Ovary (tissue), 10 donors: ENCODE measurements at regions of chr14 and their contacts with region 1.

Region 1: GRCh38 chr14:26761532-26761931 is 163.7 kb upstream of the NOVA1 start:
- DNase-seq: no peak
- H3K4me3 ChIP-seq: no peak overlapping the region
- H3K27ac ChIP-seq: no peak overlapping the region
- H3K4me1 ChIP-seq: no peaks in the 10 kb centered on the region
- H3K27me3 ChIP-seq: no peaks in the 10 kb centered on the region
- CTCF ChIP-seq: no peak
- EP300 ChIP-seq: no peak
- POLR2A ChIP-seq: no peak

Region 2: DNA sequence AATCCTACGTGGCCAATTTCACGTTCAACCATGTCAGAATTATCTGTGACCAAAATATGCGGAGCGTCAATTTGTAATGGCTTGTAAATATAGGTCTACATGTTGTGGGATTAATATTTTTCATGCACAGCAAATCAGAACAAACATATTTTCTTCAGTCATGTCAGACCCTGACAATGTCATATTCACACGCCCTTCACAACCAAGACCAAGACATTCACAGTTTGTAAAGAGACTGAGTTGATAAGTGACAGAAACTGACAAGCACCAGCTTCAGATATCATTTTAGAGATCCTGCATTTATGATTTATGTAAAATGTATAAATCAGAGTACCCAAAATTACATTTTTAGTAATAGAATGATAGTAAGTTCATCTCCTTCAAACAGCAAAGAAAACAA is 106.4 kb before region 1 on chr14:
- intact Hi-C with region 1: no loop called
- DNase-seq: no peak
- H3K4me3 ChIP-seq: no peak overlapping the region
- H3K27ac ChIP-seq: no peak overlapping the region
- H3K4me1 ChIP-seq: no peaks in the 10 kb centered on the region
- H3K27me3 ChIP-seq: no peaks in the 10 kb centered on the region
- CTCF ChIP-seq: no peak
- EP300 ChIP-seq: no peak
- POLR2A ChIP-seq: no peak

Region 3: DNA sequence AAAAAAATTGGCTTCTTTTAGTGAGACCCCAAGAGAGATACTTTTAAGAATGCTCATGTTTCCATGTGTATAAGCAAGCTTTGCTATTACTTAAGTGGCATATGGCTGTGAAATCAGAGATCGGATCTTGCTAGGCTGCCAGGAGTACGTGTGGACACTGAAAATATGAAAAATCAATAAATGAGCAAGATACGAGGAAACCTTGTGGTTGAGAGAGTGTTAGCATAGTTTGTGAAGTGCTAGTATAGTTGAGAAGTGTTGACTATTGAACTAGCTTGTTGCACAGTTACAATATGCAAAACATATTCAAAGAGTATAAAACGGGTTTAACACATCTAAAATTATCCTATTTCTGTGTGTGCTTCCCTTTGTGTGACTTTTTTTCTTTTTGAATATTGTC is 67.2 kb after region 1 on chr14:
- intact Hi-C with region 1: no loop called
- DNase-seq: no peak
- H3K4me3 ChIP-seq: no peak overlapping the region
- H3K27ac ChIP-seq: no peak overlapping the region
- H3K4me1 ChIP-seq: no peaks in the 10 kb centered on the region
- H3K27me3 ChIP-seq: no peaks in the 10 kb centered on the region
- CTCF ChIP-seq: no peak
- EP300 ChIP-seq: no peak
- POLR2A ChIP-seq: no peak

Region 4: DNA sequence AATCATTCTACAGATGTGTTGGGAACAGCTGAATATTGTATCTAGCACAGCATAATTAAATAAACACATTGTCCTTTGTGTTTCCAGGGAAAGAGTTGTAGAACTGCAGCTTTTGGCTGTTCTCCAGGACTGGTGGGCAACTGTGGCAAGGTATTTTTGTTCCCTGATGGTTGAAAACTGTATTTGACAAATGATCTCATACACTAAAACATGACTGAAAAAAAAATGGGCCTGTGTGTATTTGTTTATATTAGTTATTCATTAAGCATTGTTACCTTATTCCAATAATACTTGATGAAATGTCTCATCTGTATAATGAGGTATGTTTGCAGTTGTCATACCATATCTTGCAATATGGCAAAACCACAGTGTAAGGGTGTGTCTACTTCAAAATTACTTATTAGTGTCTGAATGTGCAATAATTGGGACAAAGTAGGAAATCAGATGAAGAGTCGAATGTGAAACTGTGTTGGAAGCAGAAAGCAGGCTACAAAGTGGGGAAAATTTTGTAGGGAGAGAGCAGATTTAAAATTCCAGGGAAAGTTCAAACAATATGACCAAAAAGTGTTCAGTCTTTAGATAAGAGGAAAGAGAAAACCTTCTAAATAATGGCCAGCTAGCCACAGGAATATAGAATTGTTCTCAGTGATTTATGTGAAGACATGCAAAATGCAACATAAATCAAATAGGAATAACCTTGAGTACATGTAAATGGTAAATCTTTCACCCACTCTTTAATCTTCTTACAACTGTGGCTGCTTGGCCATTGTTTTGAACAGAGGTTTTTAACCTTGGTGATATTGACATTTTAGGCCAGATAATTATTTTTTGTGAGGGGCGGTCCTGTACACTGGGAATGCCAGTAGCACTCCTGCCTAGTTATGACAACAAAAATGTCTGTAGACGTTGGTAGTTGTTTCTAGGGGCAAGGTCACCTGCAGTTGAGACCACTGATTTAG is 315.9 kb after region 1 on chr14:
- intact Hi-C with region 1: loop called in 1 of 4 experiments (anchors 10 kb)
- DNase-seq: no peak
- H3K4me3 ChIP-seq: no peak overlapping the region
- H3K27ac ChIP-seq: no peak overlapping the region
- H3K4me1 ChIP-seq: no peaks in the 10 kb centered on the region
- H3K27me3 ChIP-seq: no peaks in the 10 kb centered on the region
- CTCF ChIP-seq: no peak
- EP300 ChIP-seq: no peak
- POLR2A ChIP-seq: no peak

Region 5: DNA sequence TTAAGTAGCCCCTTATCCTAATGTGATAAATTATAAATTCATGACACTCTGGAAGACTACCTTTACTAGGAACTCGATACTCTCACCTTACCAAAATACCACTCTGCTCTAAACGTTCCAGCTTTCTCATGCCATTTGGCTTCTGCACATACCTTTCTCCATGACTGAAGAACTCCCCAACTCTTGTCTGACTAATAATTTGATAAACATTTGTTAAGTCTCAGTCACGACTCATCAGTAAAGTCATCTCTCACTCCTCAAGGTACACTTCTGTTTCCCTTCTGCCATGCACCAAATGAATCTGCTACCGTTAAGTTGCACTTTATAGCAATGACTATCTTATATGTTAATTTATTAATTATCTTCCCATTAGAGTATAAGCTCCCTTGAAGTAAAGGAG is 334.6 kb after region 1 on chr14:
- intact Hi-C with region 1: no loop called
- DNase-seq: no peak
- H3K4me3 ChIP-seq: no peak overlapping the region
- H3K27ac ChIP-seq: no peak overlapping the region
- H3K4me1 ChIP-seq: no peaks in the 10 kb centered on the region
- H3K27me3 ChIP-seq: no peaks in the 10 kb centered on the region
- CTCF ChIP-seq: no peak
- EP300 ChIP-seq: no peak
- POLR2A ChIP-seq: no peak